Tibial artery (tissue), 4 donors: ENCODE measurements at regions of chr12 and their contacts with region 1.

Region 1: DNA sequence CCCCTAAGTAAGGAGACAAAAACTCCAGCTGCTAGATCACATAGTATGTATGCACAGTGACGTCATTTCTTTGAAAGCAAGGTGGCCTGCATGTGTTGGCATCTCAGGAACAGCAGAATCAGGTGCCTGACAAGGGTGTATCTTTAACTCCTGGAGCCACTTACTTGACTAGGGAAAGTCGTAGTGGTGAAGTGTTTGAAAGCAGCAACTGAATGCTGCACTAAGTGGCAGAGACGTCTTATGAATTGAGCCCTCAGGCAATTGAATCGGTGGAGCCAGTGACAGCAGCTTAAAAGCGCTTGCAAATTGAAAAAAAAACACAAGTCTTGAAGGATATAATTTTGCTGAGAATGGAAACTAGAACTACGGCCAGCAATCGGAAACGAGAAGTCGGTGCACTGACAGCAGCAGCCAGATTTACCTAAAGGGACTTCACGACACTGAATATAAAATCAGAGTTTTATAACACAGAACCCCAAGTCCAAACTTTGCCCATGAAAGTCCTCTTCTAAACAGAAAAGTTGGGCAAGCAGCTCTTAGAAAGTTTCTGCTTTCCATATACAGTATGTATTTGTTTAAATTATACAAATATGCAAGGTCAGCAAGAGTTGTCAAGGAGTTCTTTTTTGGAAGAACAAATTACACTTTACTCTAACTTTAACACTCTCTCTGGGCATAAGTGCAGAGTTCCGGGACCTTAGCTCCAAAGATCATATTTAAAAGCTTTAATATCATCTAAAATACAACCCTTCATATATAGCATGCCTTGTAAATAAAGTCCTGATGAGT is 1.1 kb downstream of the IGF1 start:
- DNase-seq: no peak
- H3K4me3 ChIP-seq: peak overlapping the region; percentile 32 to 38
- H3K27ac ChIP-seq: peak overlapping the region in 1 of 2 donors; percentile 26
- H3K4me1 ChIP-seq: peaks cover 0 to 32% (median 26%) of the 10 kb centered on the region in 4 donors
- H3K27me3 ChIP-seq: no peaks in the 10 kb centered on the region
- CTCF ChIP-seq: no peak

Region 2: GRCh38 chr12:101939856-101940265 is 539.4 kb before region 1 on chr12:
- intact Hi-C with region 1: loop called (anchors 5 kb)
- DNase-seq: peak in 1 of 2 donors; percentile 73
- H3K4me3 ChIP-seq: no peak overlapping the region
- H3K27ac ChIP-seq: peak overlapping the region in 1 of 2 donors; percentile 13
- H3K4me1 ChIP-seq: peaks cover 0 to 6% (median 0%) of the 10 kb centered on the region in 4 donors
- H3K27me3 ChIP-seq: no peaks in the 10 kb centered on the region
- CTCF ChIP-seq: peak; percentile 44 to 58

Region 3: GRCh38 chr12:101967506-101967905 is 511.8 kb before region 1 on chr12:
- intact Hi-C with region 1: no loop called
- DNase-seq: no peak
- H3K4me3 ChIP-seq: no peak overlapping the region
- H3K27ac ChIP-seq: no peak overlapping the region
- H3K4me1 ChIP-seq: no peaks in the 10 kb centered on the region
- H3K27me3 ChIP-seq: no peaks in the 10 kb centered on the region
- CTCF ChIP-seq: no peak

Region 4: GRCh38 chr12:102317155-102317554 is 162.1 kb before region 1 on chr12:
- intact Hi-C with region 1: no loop called
- DNase-seq: no peak
- H3K4me3 ChIP-seq: no peak overlapping the region
- H3K27ac ChIP-seq: no peak overlapping the region
- H3K4me1 ChIP-seq: no peaks in the 10 kb centered on the region
- H3K27me3 ChIP-seq: no peaks in the 10 kb centered on the region
- CTCF ChIP-seq: no peak

Region 5: GRCh38 chr12:102573237-102573636 is 93.9 kb after region 1 on chr12:
- intact Hi-C with region 1: no loop called
- DNase-seq: no peak
- H3K4me3 ChIP-seq: no peak overlapping the region
- H3K27ac ChIP-seq: no peak overlapping the region
- H3K4me1 ChIP-seq: no peaks in the 10 kb centered on the region
- H3K27me3 ChIP-seq: no peaks in the 10 kb centered on the region
- CTCF ChIP-seq: no peak